Right ventricle myocardium inferior (tissue), 1 donor: ENCODE measurements at regions of chr15 and their contacts with region 1.

Region 1: DNA sequence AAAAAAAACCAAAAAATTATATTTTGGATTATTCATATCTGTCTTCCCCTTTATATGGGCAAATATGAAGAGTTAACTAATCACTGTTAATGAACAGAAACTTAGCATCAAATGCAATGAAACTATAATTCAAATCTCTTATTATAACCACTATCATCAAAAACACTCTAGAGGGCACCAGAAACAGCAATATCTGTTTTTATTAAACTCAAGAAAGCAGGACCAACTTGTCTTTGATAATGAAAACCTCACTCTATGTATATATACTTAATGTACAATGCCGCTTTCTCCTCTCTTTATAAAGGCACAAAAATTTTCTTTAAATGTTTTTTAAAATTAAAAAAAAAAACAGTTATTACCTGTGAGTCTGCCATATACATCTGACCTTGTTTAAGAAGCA is 92.7 kb downstream of the UACA start:
- DNase-seq: no peak
- ATAC-seq: no peak

Region 2: GRCh38 chr15:70435369-70435768 is 235.3 kb before region 1 on chr15:
- intact Hi-C with region 1: no loop called
- DNase-seq: no peak
- ATAC-seq: no peak

Region 3: GRCh38 chr15:70722266-70723121 is 51.8 kb after region 1 on chr15:
- intact Hi-C with region 1: loop called (anchors 10 kb)
- DNase-seq: no peak
- ATAC-seq: no peak